ENCODE measurements at regions of chr7 and their contacts with region 1.

Region 1: DNA sequence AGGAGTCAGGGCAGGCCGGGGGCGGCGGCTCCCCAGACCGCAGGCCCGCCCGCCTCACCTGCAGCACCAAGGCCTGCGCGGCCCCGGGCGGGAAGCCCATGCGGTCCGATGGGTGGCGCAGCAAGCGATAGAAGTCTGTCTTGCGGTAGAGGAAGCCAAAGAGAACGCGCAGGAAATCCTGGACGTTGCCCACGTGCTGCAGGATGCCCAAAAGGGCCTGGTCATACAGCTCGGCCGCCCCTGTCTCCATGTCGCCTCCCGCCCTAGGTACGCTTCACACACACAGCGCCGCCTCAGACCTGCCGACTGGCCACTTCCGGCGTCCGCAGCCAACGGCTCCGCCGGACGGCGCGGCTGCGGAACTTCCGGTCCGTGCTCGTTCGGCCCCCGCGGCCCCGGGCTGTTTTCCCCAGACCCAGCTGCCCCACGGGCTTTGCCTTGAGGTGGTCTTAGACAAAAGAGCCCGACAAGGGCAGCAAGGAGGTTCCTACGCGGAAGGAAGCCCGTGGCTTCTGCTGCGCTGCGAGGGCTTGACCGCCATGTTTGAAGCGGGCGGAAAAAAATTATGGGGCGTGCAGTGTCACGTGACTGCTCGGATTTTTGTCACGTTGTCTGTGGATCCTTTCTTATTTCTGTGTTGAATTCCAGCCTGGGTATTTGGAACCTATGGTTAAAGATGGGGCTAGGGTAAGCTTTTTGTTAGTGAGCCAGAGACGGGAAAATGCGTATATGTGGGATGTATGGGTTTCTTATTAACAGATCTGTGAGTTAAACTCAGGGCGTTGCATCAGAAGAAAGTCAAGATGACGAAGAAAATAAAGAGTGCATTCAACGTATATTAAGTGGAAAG is at the start of gene NUDCD3:
- DNase-seq: peak; percentile 69 to 88 (median 83)
- H3K4me3 ChIP-seq: peak within 1 kb of the TSS; percentile 65 to 100 (median 96)
- H3K27ac ChIP-seq: peak within 1 kb of the TSS; percentile 82 to 100 (median 98)
- H3K27me3 ChIP-seq: peaks cover 0 to 4% (median 0%) of the 10 kb centered on the region in 45 donors
- CTCF ChIP-seq: peak in 47 of 56 donors; percentile 1 to 72 (median 45)
- total RNA-seq, gene NUDCD3: 157 to 398 (median 298) TPM

Region 2: DNA sequence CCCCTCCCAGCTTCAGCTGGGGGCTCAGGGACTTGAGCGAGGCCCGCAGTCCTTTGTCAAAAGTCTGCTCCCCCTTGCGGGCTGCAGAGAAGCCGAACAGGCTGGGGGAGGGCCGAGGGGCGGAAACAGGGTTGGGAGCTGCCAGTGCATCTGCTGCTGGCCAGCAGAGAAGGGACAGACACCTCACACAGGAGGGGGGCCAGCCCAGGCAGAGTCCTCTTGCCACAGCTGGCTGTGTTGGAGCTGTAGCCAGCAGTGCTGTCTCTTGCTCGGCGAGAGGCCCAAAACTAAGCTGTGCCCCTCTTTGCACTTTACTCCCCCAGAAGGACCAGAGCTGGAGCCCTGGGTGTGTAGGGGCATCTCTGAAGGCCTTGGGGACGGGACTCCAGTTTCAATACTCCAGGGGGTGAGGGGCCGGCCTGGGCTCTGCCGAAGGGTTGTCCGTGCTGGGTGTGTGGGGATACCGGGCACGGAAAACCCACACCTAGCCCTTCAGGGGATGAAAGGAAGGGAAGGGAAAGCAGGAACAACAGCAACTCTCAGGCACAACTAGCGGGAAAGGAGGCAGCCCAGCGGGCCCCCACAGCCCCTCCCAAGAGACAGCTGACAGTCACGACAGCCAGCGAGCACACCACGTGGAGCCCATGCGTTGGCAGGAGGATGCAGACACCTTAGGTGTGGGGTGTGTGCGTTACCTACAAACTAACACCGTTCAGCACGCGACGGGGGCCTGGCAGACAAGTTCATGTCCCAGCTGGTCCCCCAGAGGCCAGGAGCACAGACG is 272.0 kb before region 1 on chr7:
- intact Hi-C with region 1: loop called in 1 of 2 experiments (anchors 10 kb)
- DNase-seq: peak in 5 of 10 donors; percentile 28 to 43 (median 33)
- H3K4me3 ChIP-seq: no peak overlapping the region
- H3K27ac ChIP-seq: peak overlapping the region in 4 of 59 donors; percentile 7 to 48 (median 24)
- H3K27me3 ChIP-seq: no peaks in the 10 kb centered on the region
- CTCF ChIP-seq: no peak

Region 3: DNA sequence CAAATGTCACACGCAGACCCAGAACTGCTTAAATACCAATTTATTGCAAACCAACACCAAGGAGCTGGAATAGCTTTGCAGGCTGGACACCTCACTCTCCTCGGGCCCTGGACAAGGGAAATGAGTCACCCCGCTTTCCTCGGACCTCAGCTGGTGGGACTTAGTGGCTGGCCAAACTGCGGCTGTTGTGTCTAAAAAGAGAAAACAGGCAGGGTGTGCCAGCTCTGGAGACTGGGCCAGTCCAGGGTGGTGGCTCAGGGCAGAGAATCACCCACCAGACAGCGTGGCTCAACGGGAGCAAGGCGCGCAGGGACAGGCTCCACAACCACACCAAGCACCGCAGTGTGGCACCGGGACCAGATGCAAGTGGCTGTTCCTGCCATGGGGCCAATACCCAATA is 107.0 kb before region 1 on chr7:
- intact Hi-C with region 1: no loop called
- DNase-seq: peak in 2 of 10 donors; percentile 37 to 55
- H3K4me3 ChIP-seq: no peak overlapping the region
- H3K27ac ChIP-seq: peak overlapping the region in 52 of 59 donors; percentile 6 to 91 (median 80)
- H3K27me3 ChIP-seq: no peaks in the 10 kb centered on the region
- CTCF ChIP-seq: no peak